PC-9 (cell line): ENCODE measurements at regions of chr10 and their contacts with region 1.

Region 1: GRCh38 chr10:4131407-4132228 is 346.6 kb upstream of the KLF6 start:
- DNase-seq: peak; percentile 6 to 80
- H3K4me3 ChIP-seq: no peak overlapping the region
- H3K27ac ChIP-seq: peak overlapping the region; percentile 50
- H3K4me1 ChIP-seq: peaks cover 18% of the 10 kb centered on the region
- H3K27me3 ChIP-seq: no peaks in the 10 kb centered on the region
- CTCF ChIP-seq: no peak

Region 2: DNA sequence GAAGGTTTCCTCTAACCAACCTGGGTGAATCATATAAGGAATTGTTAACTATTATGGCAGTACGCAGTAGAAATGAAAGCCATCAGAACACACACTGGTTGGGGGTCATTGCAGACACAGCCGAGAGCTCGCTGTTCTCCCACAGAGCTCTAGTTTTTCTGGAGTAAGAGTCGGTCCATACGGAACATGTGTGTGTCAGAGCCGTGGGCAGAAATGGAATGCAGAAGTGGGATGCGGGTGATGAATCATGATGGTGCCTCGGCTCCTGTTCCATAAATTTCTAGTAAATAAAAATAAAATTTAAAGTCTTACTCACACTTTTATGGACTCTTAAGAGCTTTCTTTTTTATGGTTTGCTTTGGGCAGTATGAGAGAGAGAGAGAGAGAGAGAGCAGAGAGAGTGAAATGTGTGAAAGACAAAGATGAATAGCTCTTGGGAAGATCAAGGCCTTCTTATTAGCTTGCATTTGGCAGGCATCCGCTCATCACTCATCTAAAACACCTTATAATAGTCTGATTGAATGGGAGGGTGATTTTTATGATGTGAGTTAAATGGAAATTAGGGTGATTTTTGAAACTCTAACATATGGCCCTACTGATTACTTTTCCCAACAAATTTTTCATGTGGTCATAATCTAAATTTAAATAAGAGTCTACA is 1163.1 kb before region 1 on chr10:
- CTCF ChIA-PET with region 1: no interaction called
- POLR2A ChIA-PET with region 1: no interaction called
- intact Hi-C with region 1: no loop called
- DNase-seq: no peak
- H3K4me3 ChIP-seq: no peak overlapping the region
- H3K27ac ChIP-seq: no peak overlapping the region
- H3K4me1 ChIP-seq: no peaks in the 10 kb centered on the region
- H3K27me3 ChIP-seq: peaks cover 20% of the 10 kb centered on the region; the same call in 1 of the 2 replicates
- CTCF ChIP-seq: no peak

Region 3: DNA sequence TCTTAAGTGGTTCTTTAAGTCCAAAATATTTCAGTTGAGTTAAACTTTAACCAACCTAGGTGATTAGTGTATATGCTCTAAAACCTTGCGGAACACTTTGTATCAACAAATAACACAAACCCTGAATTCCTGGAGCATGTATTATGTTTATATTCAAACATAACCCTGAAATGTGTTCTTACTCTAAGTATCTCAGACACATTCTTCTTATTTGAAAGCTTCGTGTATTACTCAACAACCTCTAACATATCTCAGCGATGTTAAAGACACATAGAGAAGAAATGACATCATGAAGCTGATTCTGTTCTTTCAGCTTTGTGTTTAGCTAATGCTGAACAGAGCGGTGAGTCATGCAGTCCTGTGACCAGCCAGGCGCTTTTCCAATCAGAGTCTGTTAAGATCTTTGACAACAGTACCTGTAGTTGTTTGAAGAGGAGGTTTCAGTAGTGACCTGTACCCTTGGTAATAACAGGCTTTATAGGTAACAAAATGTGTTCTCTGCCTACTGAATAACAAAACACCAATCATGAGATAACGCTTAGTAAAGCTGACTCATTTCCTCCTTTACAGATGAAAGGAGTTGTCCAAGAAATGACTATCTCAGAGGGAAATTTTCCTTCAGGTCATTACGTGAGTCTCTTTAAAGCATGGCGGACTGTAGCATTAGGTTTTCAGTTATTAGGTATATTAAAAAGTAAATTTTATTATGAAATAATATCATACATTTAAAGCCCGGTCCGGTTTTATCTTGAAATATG is 279.3 kb before region 1 on chr10:
- CTCF ChIA-PET with region 1: no interaction called
- POLR2A ChIA-PET with region 1: interaction called, 15 read pairs
- intact Hi-C with region 1: no loop called
- DNase-seq: peak; percentile 74 to 99
- H3K4me3 ChIP-seq: peak overlapping the region; percentile 16; the same call in 1 of the 2 replicates
- H3K27ac ChIP-seq: peak overlapping the region; percentile 96
- H3K4me1 ChIP-seq: peaks cover 28% of the 10 kb centered on the region
- H3K27me3 ChIP-seq: no peaks in the 10 kb centered on the region
- CTCF ChIP-seq: no peak

Region 4: GRCh38 chr10:4111643-4112042 is 20.0 kb before region 1 on chr10:
- CTCF ChIA-PET with region 1: no interaction called
- POLR2A ChIA-PET with region 1: interaction called, 14 read pairs
- intact Hi-C with region 1: no loop called
- DNase-seq: no peak
- H3K4me3 ChIP-seq: no peak overlapping the region
- H3K27ac ChIP-seq: no peak overlapping the region
- H3K4me1 ChIP-seq: no peaks in the 10 kb centered on the region
- H3K27me3 ChIP-seq: no peaks in the 10 kb centered on the region
- CTCF ChIP-seq: no peak

Region 5: GRCh38 chr10:4470231-4470835 is 338.7 kb after region 1 on chr10:
- CTCF ChIA-PET with region 1: interaction called, 12 read pairs
- POLR2A ChIA-PET with region 1: no interaction called
- intact Hi-C with region 1: no loop called
- DNase-seq: peak; percentile 17 to 59
- H3K4me3 ChIP-seq: no peak overlapping the region
- H3K27ac ChIP-seq: no peak overlapping the region
- H3K4me1 ChIP-seq: 0 out of 2 replicates have a peak, but pooled peaks cover 9% of the 10 kb centered on the region
- H3K27me3 ChIP-seq: no peaks in the 10 kb centered on the region
- CTCF ChIP-seq: no peak